HepG2 (cell line): ENCODE measurements at regions of chr1 and their contacts with region 1.

Region 1: DNA sequence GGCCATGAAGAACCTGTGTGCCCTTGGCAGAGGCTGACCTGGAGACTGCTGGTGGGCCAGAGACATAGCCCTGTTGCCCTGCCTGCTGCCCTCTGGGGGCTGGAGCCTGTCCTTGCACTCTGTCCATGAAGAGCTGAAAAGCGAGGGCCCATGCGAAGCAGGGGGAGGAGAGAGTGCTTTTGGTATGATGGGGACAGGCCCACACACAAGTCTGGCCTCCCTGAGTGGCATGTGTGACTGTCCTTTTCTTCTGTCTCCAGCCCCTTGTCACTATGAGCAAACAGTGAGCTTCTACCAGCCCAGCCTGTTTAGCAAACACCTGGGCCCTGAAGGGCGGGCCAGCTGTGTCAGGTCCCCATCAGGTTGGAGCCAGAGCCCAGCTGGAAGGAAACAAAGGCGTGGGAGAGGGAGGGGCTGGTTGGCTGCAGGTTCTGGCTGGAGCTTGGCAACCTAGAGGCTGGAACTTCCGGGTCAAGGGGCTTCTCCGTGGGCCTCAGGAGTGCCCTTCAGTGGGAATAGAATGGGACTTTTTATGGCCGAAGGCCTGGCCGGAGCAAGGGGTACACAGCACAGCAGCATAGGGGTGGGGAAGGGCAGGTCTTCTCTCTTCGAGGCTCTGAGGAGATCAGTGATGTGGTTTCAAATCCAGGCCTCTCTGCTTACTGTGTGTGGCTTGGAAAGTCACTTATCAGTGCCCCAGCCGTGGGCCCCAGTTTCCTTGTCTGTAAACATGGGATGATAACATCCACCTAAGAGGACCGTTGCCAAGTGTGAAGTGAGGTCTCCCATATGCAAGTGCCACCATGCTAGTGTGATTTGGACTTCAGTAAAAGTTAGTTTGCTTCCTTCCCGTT is 14.3 kb downstream of the QSOX1 start:
- DNase-seq: peak; percentile 43
- ATAC-seq: peak; percentile 94
- H3K4me3 ChIP-seq: no peak overlapping the region
- H3K27ac ChIP-seq: no peak overlapping the region
- H3K4me1 ChIP-seq: peaks cover 40% of the 10 kb centered on the region
- H3K27me3 ChIP-seq: no peaks in the 10 kb centered on the region
- CTCF ChIP-seq: peak; percentile 83
- EP300 ChIP-seq: no peak
- POLR2A ChIP-seq: no peak
- RAD21 ChIP-seq: peak; percentile 73

Region 2: GRCh38 chr1:180116964-180117763 is 51.8 kb before region 1 on chr1:
- CTCF ChIA-PET with region 1: no interaction called
- POLR2A ChIA-PET with region 1: no interaction called
- in situ Hi-C with region 1: no loop called
- intact Hi-C with region 1: loop called (anchors 5 kb)
- DNase-seq: peak; percentile 79
- ATAC-seq: peak; percentile 95
- H3K4me3 ChIP-seq: 0 out of 6 replicates have a peak overlapping the region, but pooled peaks of 1 of the 3 experiments have one; percentile 27
- H3K27ac ChIP-seq: peak overlapping the region; percentile 48
- H3K4me1 ChIP-seq: peaks cover 23% of the 10 kb centered on the region
- H3K27me3 ChIP-seq: no peaks in the 10 kb centered on the region; a peak in 1 of 5 replicates
- CTCF ChIP-seq: peak; percentile 17; the same call in 1 of the 2 replicates
- EP300 ChIP-seq: peak in 1 of 2 experiments; percentile 64; a peak in 1 of 4 replicates
- POLR2A ChIP-seq: peak in 1 of 2 experiments; percentile 36; a peak in 1 of 4 replicates
- RAD21 ChIP-seq: 0 out of 2 replicates have a peak, but pooled peaks have one; percentile 16

Region 3: GRCh38 chr1:180327089-180327488 is 158.1 kb after region 1 on chr1:
- CTCF ChIA-PET with region 1: no interaction called
- POLR2A ChIA-PET with region 1: no interaction called
- in situ Hi-C with region 1: no loop called
- intact Hi-C with region 1: no loop called
- DNase-seq: no peak
- ATAC-seq: no peak
- H3K4me3 ChIP-seq: no peak overlapping the region
- H3K27ac ChIP-seq: no peak overlapping the region
- H3K4me1 ChIP-seq: no peaks in the 10 kb centered on the region
- H3K27me3 ChIP-seq: no peaks in the 10 kb centered on the region
- CTCF ChIP-seq: no peak
- EP300 ChIP-seq: no peak
- POLR2A ChIP-seq: no peak
- RAD21 ChIP-seq: no peak